ENCODE measurements at regions of chr17 and their contacts with region 1.

Region 1: DNA sequence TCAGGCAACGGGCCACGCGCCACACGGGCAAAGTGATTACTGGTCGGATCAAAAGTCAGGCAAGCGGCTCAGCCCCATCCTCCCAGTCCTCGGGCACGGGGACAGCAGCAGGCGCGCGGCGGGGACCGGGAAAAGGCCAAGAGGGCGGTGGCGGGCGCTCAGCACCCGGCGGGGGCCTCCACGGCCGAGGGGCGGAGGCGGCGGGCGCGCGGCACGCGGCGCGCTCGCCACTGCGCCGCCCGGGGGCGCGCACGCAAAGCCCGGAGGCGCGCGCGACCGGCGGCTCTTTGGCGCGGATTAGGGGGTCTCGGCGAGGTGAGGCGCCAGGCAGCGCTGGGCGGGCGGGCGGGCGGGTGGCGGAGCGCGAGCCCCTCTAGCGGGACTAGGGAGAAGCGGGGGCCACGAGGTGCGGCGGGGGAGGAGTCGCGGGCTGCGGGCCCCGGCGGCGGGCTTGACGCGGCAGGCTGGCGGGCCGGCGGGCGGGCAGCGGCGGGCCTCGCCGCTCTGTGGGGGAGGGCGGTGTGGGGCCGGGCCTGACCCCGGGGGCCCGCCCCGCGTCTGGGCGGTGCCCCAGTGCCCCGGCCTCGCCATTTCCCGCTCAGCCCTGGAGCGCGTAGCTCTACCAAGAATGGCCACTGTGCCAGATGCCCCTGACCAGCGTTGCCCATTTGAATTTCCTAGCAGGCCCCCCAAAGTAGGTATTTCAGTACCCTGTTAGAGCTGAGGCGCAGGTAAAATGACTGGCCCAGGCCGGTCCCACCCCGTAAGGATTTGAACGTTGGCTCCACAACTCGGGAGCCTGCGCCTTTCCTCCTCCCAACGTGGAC is at the starts of genes ACACA and TADA2A:
- DNase-seq: peak; percentile 82

Region 2: GRCh38 chr17:37417852-37418251 is 11.0 kb after region 1 on chr17:
- CTCF ChIA-PET with region 1: no interaction called
- POLR2A ChIA-PET with region 1: interaction called, 10 read pairs
- DNase-seq: no peak

Region 3: DNA sequence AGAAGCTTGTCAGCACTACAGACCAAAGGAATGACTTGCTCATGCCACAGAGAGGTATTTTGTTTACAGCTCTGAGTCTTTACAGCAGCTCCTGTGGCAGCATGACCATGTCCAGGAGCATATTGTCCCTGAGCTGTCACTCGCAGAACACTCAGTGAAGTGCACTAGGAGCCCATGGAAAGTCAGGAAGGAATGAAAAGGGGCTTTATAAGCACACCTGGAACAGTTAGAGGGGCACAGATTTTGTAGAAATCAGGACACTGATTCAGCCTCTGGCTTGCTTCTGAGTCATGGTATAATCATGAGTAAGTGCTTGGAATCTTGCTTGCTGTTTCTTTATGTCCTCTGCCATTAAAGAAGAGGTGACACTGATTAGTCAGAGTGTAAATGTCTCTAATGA is 40.8 kb after region 1 on chr17:
- CTCF ChIA-PET with region 1: no interaction called
- POLR2A ChIA-PET with region 1: no interaction called
- DNase-seq: no peak